ENCODE measurements at regions of chr2 and their contacts with region 1.

Region 1: GRCh38 chr2:182207049-182207746 is 219.6 kb downstream of the PDE1A start:
- DNase-seq: no peak
- ATAC-seq: no peak
- H3K4me3 Mint-ChIP-seq: no peak overlapping the region
- H3K27ac Mint-ChIP-seq: no peak overlapping the region
- H3K4me1 Mint-ChIP-seq: no peaks in the 10 kb centered on the region
- H3K27me3 Mint-ChIP-seq: peaks cover 5% of the 10 kb centered on the region

Region 2: DNA sequence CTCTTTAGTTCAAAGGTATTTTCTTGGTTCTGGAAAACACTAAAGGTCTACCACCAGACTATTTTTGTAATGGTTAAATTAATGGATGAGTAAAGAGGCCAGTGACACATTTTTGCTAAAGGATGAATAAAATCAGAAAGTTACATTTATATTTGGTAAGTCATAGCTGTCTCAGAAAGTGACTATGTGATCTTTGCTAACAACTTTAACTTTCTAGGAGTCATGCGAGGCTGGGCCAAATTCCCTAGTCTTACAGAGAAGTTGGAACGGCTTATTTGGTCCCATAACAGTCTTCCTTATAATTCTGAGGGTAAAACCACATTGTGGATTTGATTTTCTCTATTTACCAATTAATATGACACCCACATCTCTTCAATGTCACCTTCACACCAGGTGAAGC is 21.5 kb after region 1 on chr2:
- CTCF ChIA-PET with region 1: no interaction called
- POLR2A ChIA-PET with region 1: no interaction called
- intact Hi-C with region 1: loop called in 1 of 2 experiments (anchors 1 kb)
- DNase-seq: no peak
- ATAC-seq: no peak
- H3K4me3 Mint-ChIP-seq: no peak overlapping the region
- H3K27ac Mint-ChIP-seq: no peak overlapping the region
- H3K4me1 Mint-ChIP-seq: no peaks in the 10 kb centered on the region
- H3K27me3 Mint-ChIP-seq: peaks cover 2% of the 10 kb centered on the region

Region 3: GRCh38 chr2:182245963-182246362 is 38.8 kb after region 1 on chr2:
- CTCF ChIA-PET with region 1: no interaction called
- POLR2A ChIA-PET with region 1: no interaction called
- intact Hi-C with region 1: no loop called
- DNase-seq: no peak
- ATAC-seq: no peak
- H3K4me3 Mint-ChIP-seq: no peak overlapping the region
- H3K27ac Mint-ChIP-seq: no peak overlapping the region
- H3K4me1 Mint-ChIP-seq: peaks cover under 1% of the 10 kb centered on the region
- H3K27me3 Mint-ChIP-seq: peaks cover 9% of the 10 kb centered on the region

Measured in activated CD4-positive, alpha-beta T cell treated with anti-CD3 and anti-CD28 coated beads for 36 hours (primary cell).